Sciatic nerve (tissue), 2 donors: ENCODE measurements at regions of chr13 and their contacts with region 1.

Region 1: DNA sequence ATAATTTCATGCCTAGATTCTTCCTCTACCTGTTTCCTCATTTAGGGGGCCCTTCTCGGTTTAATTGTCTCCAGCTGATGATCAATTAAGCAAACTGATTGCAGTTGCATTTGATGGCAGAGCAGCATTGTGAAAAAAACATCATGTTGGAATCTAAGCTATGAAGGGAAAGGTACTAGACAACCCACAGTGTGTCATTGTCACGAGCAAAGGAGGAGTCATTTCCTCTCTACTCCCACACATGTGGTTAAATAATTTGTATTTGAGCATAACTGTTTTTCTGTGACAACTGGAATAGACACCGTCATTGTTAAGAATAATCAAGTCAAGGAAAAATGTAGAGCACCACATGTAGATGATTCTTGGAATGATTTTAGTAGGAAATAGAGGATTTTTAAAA is 240.3 kb downstream of the DCT start:
- DNase-seq: no peak
- ATAC-seq: no peak

Region 2: GRCh38 chr13:94412870-94413597 is 173.9 kb after region 1 on chr13:
- intact Hi-C with region 1: loop called (anchors 2 kb)
- DNase-seq: no peak
- ATAC-seq: no peak

Region 3: GRCh38 chr13:94776956-94777355 is 537.8 kb after region 1 on chr13:
- intact Hi-C with region 1: no loop called
- DNase-seq: no peak
- ATAC-seq: no peak